Cardiac septum (tissue), 1 donor: ENCODE measurements at regions of chr12 and their contacts with region 1.

Region 1: GRCh38 chr12:79555028-79555930 is 135.5 kb downstream of the PAWR start:
- DNase-seq: no peak

Region 2: GRCh38 chr12:78835493-78835892 is 719.8 kb before region 1 on chr12:
- intact Hi-C with region 1: no loop called
- DNase-seq: no peak

Region 3: GRCh38 chr12:79690638-79691493 is 135.6 kb after region 1 on chr12 and contains the start of gene PAWR:
- intact Hi-C with region 1: loop called (anchors 5 kb)
- DNase-seq: no peak
- total RNA-seq, gene PAWR: 6.6 TPM

Region 4: GRCh38 chr12:79737875-79738718 is 182.8 kb after region 1 on chr12:
- intact Hi-C with region 1: loop called (anchors 5 kb)
- DNase-seq: no peak

Region 5: DNA sequence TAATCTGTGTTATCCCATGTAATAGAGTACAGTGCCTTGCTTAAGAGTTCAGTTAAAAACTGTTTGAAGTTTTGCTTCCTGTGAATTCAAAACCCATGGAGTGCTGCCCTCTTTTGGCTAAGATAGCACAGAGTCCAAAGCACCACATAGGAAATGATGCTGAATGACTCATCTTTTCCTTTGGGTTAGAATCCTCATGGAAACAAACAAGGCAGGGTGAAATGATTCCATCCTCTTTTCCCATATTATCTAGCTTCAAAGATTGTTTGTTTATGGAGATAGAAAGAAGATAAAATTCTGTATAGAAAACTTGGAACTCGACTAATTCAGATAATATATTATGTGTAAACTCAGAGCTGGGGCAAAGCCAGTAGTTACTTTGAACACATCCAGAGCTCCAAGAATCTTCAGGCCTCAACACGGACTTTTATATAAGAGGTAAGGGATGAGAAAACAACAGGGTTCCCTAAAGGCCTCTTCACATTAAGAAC is 631.5 kb after region 1 on chr12:
- intact Hi-C with region 1: loop called (anchors 5 kb)
- DNase-seq: no peak